ENCODE measurements at regions of chr12 and their contacts with region 1.

Region 1: GRCh38 chr12:78002878-78003277 is 172.2 kb downstream of the NAV3 start:
- DNase-seq: no peak
- H3K4me3 Mint-ChIP-seq: no peak overlapping the region
- H3K27ac Mint-ChIP-seq: no peak overlapping the region
- H3K4me1 Mint-ChIP-seq: peaks cover 6% of the 10 kb centered on the region
- H3K27me3 Mint-ChIP-seq: no peaks in the 10 kb centered on the region
- CTCF ChIP-seq: no peak

Region 2: GRCh38 chr12:79373896-79374499 is 1371.1 kb after region 1 on chr12:
- CTCF ChIA-PET with region 1: no interaction called
- intact Hi-C with region 1: loop called (anchors 10 kb)
- DNase-seq: peak; percentile 72
- H3K4me3 Mint-ChIP-seq: no peak overlapping the region
- H3K27ac Mint-ChIP-seq: no peak overlapping the region
- H3K4me1 Mint-ChIP-seq: no peaks in the 10 kb centered on the region
- H3K27me3 Mint-ChIP-seq: no peaks in the 10 kb centered on the region
- CTCF ChIP-seq: peak; percentile 91

Measured in Calu3 (cell line).